Esophagus muscularis mucosa (tissue), 4 donors: ENCODE measurements at regions of chr7 and their contacts with region 1.

Region 1: DNA sequence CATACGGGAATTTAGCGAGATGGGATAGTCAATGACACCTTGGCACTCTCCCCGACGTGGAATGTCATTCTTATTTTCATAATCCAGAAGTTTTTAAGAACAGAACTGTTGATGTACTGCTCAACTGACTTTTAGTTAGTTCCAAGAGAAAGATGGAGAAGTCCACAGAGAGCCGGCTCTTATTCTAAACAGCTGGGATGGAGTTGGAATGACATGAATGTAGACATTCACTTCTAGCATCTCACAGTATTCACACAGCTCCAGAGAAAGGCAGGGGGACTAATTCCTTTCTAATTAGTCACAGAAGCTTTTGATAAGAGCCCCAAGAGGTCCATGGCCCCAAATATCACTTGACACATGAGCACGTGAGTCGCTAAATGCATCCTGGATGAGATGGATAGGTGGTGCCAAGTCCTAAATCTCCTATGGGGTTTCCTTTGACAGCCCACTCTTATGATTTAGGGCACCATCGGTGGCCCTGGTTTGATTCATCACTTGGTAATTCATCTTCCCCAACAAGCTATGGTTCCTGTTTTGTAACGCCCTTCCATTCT is 420.3 kb upstream of the AUTS2 start:
- DNase-seq: no peak
- H3K4me3 ChIP-seq: peak overlapping the region in 1 of 4 donors; percentile 24
- H3K27ac ChIP-seq: peak overlapping the region; percentile 67 to 75 (median 72)
- H3K4me1 ChIP-seq: peaks cover 4 to 33% (median 25%) of the 10 kb centered on the region in 4 donors
- H3K27me3 ChIP-seq: no peaks in the 10 kb centered on the region
- CTCF ChIP-seq: no peak
- EP300 ChIP-seq: no peak
- POLR2A ChIP-seq: no peak

Region 2: DNA sequence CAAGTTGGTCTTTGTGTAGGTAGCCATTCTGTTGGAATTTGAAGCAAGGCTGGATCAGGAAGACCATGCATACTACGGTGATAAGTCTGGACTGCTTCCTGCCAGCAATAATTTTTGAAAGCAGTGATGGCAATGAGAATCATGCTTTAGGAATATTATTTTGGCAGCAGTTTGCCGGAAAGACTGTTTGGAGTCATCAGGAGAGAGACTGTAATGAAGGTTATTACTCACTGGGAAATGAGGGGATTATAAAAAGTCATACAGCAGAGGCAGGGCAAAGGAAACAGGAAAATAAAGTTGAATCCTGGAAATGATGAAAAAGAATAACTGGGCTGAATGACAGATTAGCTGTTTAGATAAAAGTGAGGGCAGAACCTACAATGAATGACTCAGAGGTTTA is 716.6 kb before region 1 on chr7:
- intact Hi-C with region 1: no loop called
- DNase-seq: no peak
- H3K4me3 ChIP-seq: no peak overlapping the region
- H3K27ac ChIP-seq: no peak overlapping the region
- H3K4me1 ChIP-seq: peaks cover 0 to 7% (median 2%) of the 10 kb centered on the region in 4 donors
- H3K27me3 ChIP-seq: no peaks in the 10 kb centered on the region
- CTCF ChIP-seq: no peak
- EP300 ChIP-seq: no peak
- POLR2A ChIP-seq: no peak

Region 3: GRCh38 chr7:69373171-69374043 is 195.4 kb after region 1 on chr7:
- intact Hi-C with region 1: loop called (anchors 5 kb)
- DNase-seq: no peak
- H3K4me3 ChIP-seq: peak overlapping the region in 1 of 4 donors; percentile 18
- H3K27ac ChIP-seq: peak overlapping the region; percentile 44 to 79 (median 60)
- H3K4me1 ChIP-seq: peaks cover 9 to 29% (median 26%) of the 10 kb centered on the region in 4 donors
- H3K27me3 ChIP-seq: no peaks in the 10 kb centered on the region
- CTCF ChIP-seq: no peak
- EP300 ChIP-seq: no peak
- POLR2A ChIP-seq: no peak